PC-9 (cell line): ENCODE measurements at regions of chr11 and their contacts with region 1.

Region 1: DNA sequence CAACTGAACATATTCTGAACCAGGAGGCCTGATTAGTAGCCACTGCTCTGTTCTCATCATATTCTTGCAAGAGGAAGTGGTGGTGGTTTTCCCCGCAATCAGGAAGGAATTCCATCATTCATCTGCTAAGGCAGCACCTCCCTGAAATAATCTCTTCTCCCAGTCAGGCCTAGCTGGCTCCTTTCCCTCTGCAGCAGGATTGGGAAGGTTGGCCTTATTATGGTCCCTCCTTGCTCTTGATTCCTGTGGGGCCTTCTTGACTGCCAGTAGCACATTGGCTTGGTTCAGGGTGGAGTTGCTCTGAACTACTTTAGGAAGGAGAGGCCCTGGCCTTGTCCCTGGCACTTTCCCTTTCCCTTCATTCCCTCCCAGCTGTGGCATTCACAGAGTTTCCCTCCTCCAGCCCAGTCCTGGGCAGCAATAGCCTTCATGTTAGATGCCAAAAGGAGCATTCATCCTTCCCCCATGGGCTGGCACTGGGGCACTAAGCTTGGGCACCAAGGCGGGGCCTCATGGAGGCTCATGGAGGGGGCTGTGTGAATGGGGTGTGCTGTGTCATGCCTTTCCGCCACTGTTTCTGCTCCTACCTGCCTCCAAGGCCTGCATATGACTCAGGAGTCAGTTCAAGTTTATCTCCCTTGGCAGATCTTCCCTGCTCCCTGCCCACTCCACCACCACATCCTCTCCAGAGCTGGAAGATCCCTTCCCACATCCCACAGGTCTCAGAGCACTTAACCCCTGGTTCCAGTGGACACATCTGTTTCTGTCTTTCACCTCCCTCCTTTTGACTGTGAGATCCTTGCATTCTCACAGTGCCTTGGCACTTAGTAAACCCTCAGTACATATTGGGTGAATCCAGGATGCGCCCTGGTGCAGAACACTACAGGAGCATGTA is 27.6 kb upstream of the CD44 start:
- DNase-seq: peak; percentile 87 to 88
- H3K4me3 ChIP-seq: no peak overlapping the region
- H3K27ac ChIP-seq: peak overlapping the region; percentile 82
- H3K4me1 ChIP-seq: peaks cover 43% of the 10 kb centered on the region
- H3K27me3 ChIP-seq: no peaks in the 10 kb centered on the region
- CTCF ChIP-seq: no peak

Region 2: GRCh38 chr11:34977089-34977906 is 134.1 kb before region 1 on chr11:
- CTCF ChIA-PET with region 1: no interaction called
- POLR2A ChIA-PET with region 1: interaction called, 19 read pairs
- intact Hi-C with region 1: no loop called
- DNase-seq: peak in 1 of 2 experiments; percentile 99
- H3K4me3 ChIP-seq: peak overlapping the region; percentile 22; the same call in 1 of the 2 replicates
- H3K27ac ChIP-seq: peak overlapping the region; percentile 77
- H3K4me1 ChIP-seq: peaks cover 58% of the 10 kb centered on the region
- H3K27me3 ChIP-seq: no peaks in the 10 kb centered on the region
- CTCF ChIP-seq: no peak

Region 3: GRCh38 chr11:35214792-35215193 is 103.4 kb after region 1 on chr11:
- CTCF ChIA-PET with region 1: no interaction called
- POLR2A ChIA-PET with region 1: no interaction called
- intact Hi-C with region 1: no loop called
- DNase-seq: peak; percentile 58 to 89
- H3K4me3 ChIP-seq: no peak overlapping the region
- H3K27ac ChIP-seq: peak overlapping the region; percentile 64
- H3K4me1 ChIP-seq: peaks cover 67% of the 10 kb centered on the region
- H3K27me3 ChIP-seq: no peaks in the 10 kb centered on the region
- CTCF ChIP-seq: no peak